ENCODE measurements at regions of chr17 and their contacts with region 1.

Region 1: GRCh38 chr17:49788478-49789242 is at the start of gene KAT7:
- DNase-seq: peak; percentile 99
- ATAC-seq: peak; percentile 91
- H3K4me3 ChIP-seq: peak within 1 kb of the TSS; percentile 74
- H3K27ac ChIP-seq: peak within 1 kb of the TSS; percentile 89
- H3K4me1 ChIP-seq: peaks cover 7% of the 10 kb centered on the region
- H3K27me3 ChIP-seq: no peaks in the 10 kb centered on the region
- CTCF ChIP-seq: 0 out of 2 replicates have a peak, but pooled peaks have one; percentile 5
- POLR2A ChIP-seq: peak; percentile 88
- RAD21 ChIP-seq: no peak
- total RNA-seq, gene KAT7: 20.6 and 21.9 TPM in 2 replicates

Region 2: DNA sequence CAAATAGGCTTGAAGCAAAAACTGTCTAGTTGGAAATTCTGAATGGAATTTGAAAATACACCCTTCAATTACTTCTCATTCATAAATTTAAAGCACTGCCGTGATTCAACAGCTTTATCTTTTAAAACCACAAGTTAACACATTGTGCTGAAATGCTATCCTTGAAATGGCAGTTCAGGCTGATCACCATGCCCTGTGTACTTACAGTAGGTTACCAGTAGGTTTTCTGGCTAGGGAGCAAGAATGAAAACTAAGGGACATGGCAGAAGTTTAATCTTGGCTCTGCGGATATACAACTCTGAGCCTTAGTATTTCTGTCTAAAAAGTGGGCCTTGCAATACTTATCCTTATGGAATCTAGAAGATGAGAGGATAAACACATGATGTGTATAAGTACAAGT is 184.9 kb before region 1 on chr17:
- CTCF ChIA-PET with region 1: no interaction called
- POLR2A ChIA-PET with region 1: no interaction called
- dilution Hi-C with region 1: no loop called
- in situ Hi-C with region 1: no loop called
- intact Hi-C with region 1: no loop called
- DNase-seq: no peak
- ATAC-seq: no peak
- H3K4me3 ChIP-seq: no peak overlapping the region
- H3K27ac ChIP-seq: no peak overlapping the region
- H3K4me1 ChIP-seq: no peaks in the 10 kb centered on the region
- H3K27me3 ChIP-seq: no peaks in the 10 kb centered on the region
- CTCF ChIP-seq: no peak
- POLR2A ChIP-seq: no peak
- RAD21 ChIP-seq: no peak

Region 3: DNA sequence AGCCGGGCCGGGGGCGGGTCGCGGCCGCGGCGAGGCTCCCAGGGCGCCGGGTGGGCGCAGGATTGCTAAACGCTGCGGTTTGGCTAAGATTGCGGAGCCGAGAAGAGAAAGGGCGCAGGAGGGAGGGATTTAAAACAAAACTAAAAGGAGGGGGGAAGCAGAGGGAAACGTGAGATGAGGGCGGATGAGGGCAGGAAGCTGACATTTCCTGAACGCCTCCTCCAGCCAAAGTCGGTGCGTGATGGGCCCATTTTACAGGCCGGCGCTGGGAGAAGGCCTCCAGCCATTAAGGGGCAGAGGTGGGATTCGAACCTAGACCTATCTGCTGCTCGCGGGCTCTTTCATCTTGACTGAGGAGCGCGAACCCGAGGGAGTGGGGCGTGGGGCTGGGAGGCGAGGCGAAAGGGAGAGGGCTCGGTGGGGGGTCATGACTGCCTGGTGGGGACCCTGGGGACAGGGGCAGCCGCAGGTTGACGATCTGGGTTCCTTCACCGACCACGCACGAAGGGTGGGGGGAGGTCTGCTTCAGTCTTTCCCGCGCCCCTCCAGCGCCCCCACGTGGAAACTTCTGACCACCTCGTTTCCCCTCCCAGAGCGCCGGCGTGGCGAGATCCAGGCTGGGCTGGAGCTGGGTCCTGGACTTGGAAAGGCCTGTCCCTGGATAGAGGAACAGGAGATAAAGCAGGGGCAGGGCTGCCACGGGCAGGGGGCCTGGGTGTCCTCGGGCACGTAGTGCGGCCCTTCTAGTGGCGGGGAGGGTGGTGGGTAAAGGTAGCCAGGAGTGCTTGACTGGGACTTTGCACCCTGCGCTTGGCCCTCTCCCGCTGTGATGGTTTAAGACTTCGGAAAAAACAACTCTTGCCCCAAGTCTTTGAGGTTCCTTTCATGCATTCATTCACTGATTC is 63.0 kb after region 1 on chr17:
- CTCF ChIA-PET with region 1: no interaction called
- POLR2A ChIA-PET with region 1: no interaction called
- dilution Hi-C with region 1: no loop called
- in situ Hi-C with region 1: no loop called
- intact Hi-C with region 1: loop called (anchors 2 kb)
- DNase-seq: peak; percentile 59
- ATAC-seq: peak; percentile 85
- H3K4me3 ChIP-seq: peak overlapping the region; percentile 39
- H3K27ac ChIP-seq: no peak overlapping the region
- H3K4me1 ChIP-seq: peaks cover 3% of the 10 kb centered on the region; the same call in 1 of the 2 replicates
- H3K27me3 ChIP-seq: peaks cover 23% of the 10 kb centered on the region; the same call in 1 of the 2 replicates
- CTCF ChIP-seq: peak; percentile 77
- POLR2A ChIP-seq: no peak
- RAD21 ChIP-seq: peak; percentile 77

Region 4: GRCh38 chr17:49899191-49899485 is 110.5 kb after region 1 on chr17:
- CTCF ChIA-PET with region 1: no interaction called
- POLR2A ChIA-PET with region 1: no interaction called
- dilution Hi-C with region 1: no loop called
- in situ Hi-C with region 1: no loop called
- intact Hi-C with region 1: no loop called
- DNase-seq: no peak
- ATAC-seq: no peak
- H3K4me3 ChIP-seq: no peak overlapping the region
- H3K27ac ChIP-seq: no peak overlapping the region
- H3K4me1 ChIP-seq: no peaks in the 10 kb centered on the region
- H3K27me3 ChIP-seq: peaks cover 95% of the 10 kb centered on the region
- CTCF ChIP-seq: no peak
- POLR2A ChIP-seq: no peak
- RAD21 ChIP-seq: no peak

Measured in IMR-90 (cell line).